ENCODE measurements at regions of chr12 and their contacts with region 1.

Region 1: DNA sequence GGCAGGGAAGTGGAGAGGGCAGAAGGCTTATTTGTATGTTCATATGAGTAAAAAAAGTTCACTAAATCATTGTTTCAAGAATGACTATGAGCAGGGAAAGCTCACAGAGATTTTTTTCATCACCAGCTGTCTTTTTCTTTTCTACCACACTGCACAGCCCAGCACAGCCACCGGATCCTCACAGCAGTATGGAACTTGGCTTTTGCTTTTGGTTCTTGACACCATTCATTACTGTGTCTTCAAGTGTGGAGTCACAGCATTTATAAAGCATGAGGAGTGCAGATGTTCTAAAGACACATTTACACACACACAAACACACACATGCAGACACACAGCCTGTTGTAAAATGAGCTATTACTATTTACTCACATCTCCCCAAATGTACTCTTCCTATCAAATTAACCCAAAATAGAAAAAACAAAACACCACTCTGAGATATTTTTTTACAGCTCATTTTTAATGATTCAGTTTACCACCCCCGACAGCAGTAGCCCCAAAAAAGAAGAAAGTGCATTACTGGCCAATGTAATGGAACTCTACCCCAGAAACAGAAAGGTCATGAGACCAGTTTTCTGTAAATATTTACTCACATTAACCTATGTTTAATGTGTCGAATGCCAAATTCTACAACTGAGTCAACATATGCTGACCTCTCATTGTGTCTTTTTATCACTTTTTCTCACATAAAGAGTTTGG is 60.5 kb downstream of the BTG1 start:
- DNase-seq: no peak

Region 2: DNA sequence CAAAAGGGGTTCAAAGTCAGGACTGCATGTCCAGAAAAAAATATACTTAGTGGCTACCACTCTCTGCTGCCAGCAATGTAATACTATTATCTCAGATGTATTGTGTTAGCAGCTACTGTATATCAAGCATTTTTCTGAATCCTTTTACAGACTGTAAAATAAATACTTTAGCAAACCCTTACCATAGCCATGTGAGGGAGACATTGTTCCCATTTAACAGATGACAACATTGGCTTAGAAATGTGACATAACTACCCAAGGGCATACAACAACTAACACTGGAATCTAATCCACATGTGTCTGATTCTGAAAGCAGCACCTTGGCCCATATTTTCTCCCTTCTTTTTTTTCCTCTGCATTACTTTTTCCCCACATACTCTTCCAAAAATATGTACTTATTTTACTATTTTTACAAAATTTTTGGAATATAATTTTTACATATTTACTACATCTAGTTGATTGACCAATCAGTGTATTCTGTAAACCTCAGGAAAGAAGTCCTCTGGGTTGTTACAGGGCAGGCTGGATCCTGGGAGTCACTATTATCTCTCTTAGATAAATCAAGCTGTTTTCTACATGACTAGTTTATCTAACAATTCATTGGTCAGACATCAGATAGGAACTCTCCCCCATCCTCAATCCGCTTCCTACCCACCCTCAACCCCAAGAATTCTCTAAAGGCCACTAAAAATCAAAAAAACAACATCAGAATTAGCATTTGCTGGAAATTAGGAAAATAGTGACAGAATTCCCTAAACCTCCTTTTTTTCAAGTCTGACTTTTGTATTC is 93.6 kb before region 1 on chr12:
- CTCF ChIA-PET with region 1: no interaction called
- POLR2A ChIA-PET with region 1: no interaction called
- DNase-seq: no peak

Region 3: GRCh38 chr12:92096346-92097136 is 11.4 kb after region 1 on chr12:
- CTCF ChIA-PET with region 1: interaction called, 10 read pairs
- POLR2A ChIA-PET with region 1: no interaction called
- DNase-seq: no peak

Measured in HEK293T (cell line).